GM12878 (cell line): ENCODE measurements at regions of chr15 and their contacts with region 1.

Region 1: GRCh38 chr15:44663409-44664308 is at the start of gene SPG11:
- DNase-seq: peak; percentile 99
- ATAC-seq: peak; percentile 84
- H3K4me3 ChIP-seq: peak within 1 kb of the TSS; percentile 89
- H3K27ac ChIP-seq: peak within 1 kb of the TSS; percentile 98
- H3K4me1 ChIP-seq: peaks cover 32% of the 10 kb centered on the region
- H3K27me3 ChIP-seq: no peaks in the 10 kb centered on the region
- CTCF ChIP-seq: peak; percentile 89 to 99 (median 97); a peak in 5 of 6 replicates
- EP300 ChIP-seq: no peak
- POLR2A ChIP-seq: peak; percentile 96
- RAD21 ChIP-seq: peak; percentile 81
- polyA plus RNA-seq, gene SPG11: 22.1 to 23.6 TPM

Region 2: GRCh38 chr15:44381236-44381635 is 282.4 kb before region 1 on chr15:
- CTCF ChIA-PET with region 1: no interaction called
- POLR2A ChIA-PET with region 1: no interaction called
- RAD21 ChIA-PET with region 1: no interaction called
- SMC1A ChIA-PET with region 1: no interaction called
- in situ Hi-C with region 1: no loop called
- intact Hi-C with region 1: no loop called
- DNase-seq: no peak
- ATAC-seq: no peak
- H3K4me3 ChIP-seq: no peak overlapping the region
- H3K27ac ChIP-seq: no peak overlapping the region
- H3K4me1 ChIP-seq: peaks cover 7% of the 10 kb centered on the region; the same call in 1 of the 2 replicates
- H3K27me3 ChIP-seq: no peaks in the 10 kb centered on the region
- CTCF ChIP-seq: no peak
- EP300 ChIP-seq: no peak
- POLR2A ChIP-seq: no peak
- RAD21 ChIP-seq: no peak

Region 3: GRCh38 chr15:44584162-44584749 is 79.4 kb before region 1 on chr15:
- CTCF ChIA-PET with region 1: interaction called, 20 read pairs
- POLR2A ChIA-PET with region 1: no interaction called
- RAD21 ChIA-PET with region 1: interaction called, 8 read pairs
- SMC1A ChIA-PET with region 1: interaction called, 21 read pairs
- in situ Hi-C with region 1: no loop called
- intact Hi-C with region 1: no loop called
- DNase-seq: no peak
- ATAC-seq: peak; percentile 99; the same call in 2 of the 3 replicates
- H3K4me3 ChIP-seq: no peak overlapping the region
- H3K27ac ChIP-seq: no peak overlapping the region
- H3K4me1 ChIP-seq: no peaks in the 10 kb centered on the region
- H3K27me3 ChIP-seq: no peaks in the 10 kb centered on the region
- CTCF ChIP-seq: peak; percentile 63 to 77 (median 75)
- EP300 ChIP-seq: no peak
- POLR2A ChIP-seq: no peak
- RAD21 ChIP-seq: peak; percentile 49

Region 4: GRCh38 chr15:44647036-44647435 is 16.6 kb before region 1 on chr15:
- CTCF ChIA-PET with region 1: interaction called, 3 read pairs
- POLR2A ChIA-PET with region 1: interaction called, 4 read pairs
- RAD21 ChIA-PET with region 1: no interaction called
- SMC1A ChIA-PET with region 1: interaction called, 10 read pairs
- in situ Hi-C with region 1: no loop called
- intact Hi-C with region 1: no loop called
- DNase-seq: no peak
- ATAC-seq: no peak
- H3K4me3 ChIP-seq: no peak overlapping the region
- H3K27ac ChIP-seq: no peak overlapping the region
- H3K4me1 ChIP-seq: no peaks in the 10 kb centered on the region
- H3K27me3 ChIP-seq: no peaks in the 10 kb centered on the region; a peak in 1 of 4 replicates
- CTCF ChIP-seq: no peak
- EP300 ChIP-seq: no peak
- POLR2A ChIP-seq: no peak
- RAD21 ChIP-seq: no peak

Region 5: GRCh38 chr15:44682211-44682610 is 18.6 kb after region 1 on chr15:
- CTCF ChIA-PET with region 1: interaction called, 60 read pairs
- POLR2A ChIA-PET with region 1: interaction called, 60 read pairs
- RAD21 ChIA-PET with region 1: interaction called, 69 read pairs
- SMC1A ChIA-PET with region 1: interaction called, 73 read pairs
- in situ Hi-C with region 1: no loop called
- intact Hi-C with region 1: loop called (anchors 2 kb)
- DNase-seq: no peak
- ATAC-seq: peak; percentile 71
- H3K4me3 ChIP-seq: no peak overlapping the region
- H3K27ac ChIP-seq: no peak overlapping the region
- H3K4me1 ChIP-seq: peaks cover 28% of the 10 kb centered on the region
- H3K27me3 ChIP-seq: no peaks in the 10 kb centered on the region
- CTCF ChIP-seq: no peak
- EP300 ChIP-seq: no peak
- POLR2A ChIP-seq: no peak
- RAD21 ChIP-seq: no peak

Region 6: DNA sequence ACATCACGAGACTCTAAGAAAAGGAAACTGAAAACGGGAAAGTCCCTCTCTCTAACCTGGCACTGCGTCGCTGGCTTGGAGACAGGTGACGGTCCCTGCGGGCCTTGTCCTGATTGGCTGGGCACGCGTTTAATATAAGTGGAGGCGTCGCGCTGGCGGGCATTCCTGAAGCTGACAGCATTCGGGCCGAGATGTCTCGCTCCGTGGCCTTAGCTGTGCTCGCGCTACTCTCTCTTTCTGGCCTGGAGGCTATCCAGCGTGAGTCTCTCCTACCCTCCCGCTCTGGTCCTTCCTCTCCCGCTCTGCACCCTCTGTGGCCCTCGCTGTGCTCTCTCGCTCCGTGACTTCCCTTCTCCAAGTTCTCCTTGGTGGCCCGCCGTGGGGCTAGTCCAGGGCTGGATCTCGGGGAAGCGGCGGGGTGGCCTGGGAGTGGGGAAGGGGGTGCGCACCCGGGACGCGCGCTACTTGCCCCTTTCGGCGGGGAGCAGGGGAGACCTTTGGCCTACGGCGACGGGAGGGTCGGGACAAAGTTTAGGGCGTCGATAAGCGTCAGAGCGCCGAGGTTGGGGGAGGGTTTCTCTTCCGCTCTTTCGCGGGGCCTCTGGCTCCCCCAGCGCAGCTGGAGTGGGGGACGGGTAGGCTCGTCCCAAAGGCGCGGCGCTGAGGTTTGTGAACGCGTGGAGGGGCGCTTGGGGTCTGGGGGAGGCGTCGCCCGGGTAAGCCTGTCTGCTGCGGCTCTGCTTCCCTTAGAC is 47.9 kb after region 1 on chr15 and contains the start of gene B2M:
- CTCF ChIA-PET with region 1: interaction called, 203 read pairs
- POLR2A ChIA-PET with region 1: interaction called, 255 read pairs
- RAD21 ChIA-PET with region 1: interaction called, 231 read pairs
- SMC1A ChIA-PET with region 1: interaction called, 119 read pairs
- in situ Hi-C with region 1: loop called (anchors 5 kb)
- intact Hi-C with region 1: loop called (anchors 1 kb)
- DNase-seq: peak; percentile 94
- ATAC-seq: peak; percentile 74
- H3K4me3 ChIP-seq: peak within 1 kb of the TSS; percentile 99
- H3K27ac ChIP-seq: peak within 1 kb of the TSS; percentile 99
- H3K4me1 ChIP-seq: peaks cover 16% of the 10 kb centered on the region
- H3K27me3 ChIP-seq: no peaks in the 10 kb centered on the region
- CTCF ChIP-seq: no peak
- EP300 ChIP-seq: no peak; a peak in 1 of 4 replicates
- POLR2A ChIP-seq: peak; percentile 98
- RAD21 ChIP-seq: no peak
- polyA plus RNA-seq, gene B2M: 16,306 to 22,794 TPM

Region 7: DNA sequence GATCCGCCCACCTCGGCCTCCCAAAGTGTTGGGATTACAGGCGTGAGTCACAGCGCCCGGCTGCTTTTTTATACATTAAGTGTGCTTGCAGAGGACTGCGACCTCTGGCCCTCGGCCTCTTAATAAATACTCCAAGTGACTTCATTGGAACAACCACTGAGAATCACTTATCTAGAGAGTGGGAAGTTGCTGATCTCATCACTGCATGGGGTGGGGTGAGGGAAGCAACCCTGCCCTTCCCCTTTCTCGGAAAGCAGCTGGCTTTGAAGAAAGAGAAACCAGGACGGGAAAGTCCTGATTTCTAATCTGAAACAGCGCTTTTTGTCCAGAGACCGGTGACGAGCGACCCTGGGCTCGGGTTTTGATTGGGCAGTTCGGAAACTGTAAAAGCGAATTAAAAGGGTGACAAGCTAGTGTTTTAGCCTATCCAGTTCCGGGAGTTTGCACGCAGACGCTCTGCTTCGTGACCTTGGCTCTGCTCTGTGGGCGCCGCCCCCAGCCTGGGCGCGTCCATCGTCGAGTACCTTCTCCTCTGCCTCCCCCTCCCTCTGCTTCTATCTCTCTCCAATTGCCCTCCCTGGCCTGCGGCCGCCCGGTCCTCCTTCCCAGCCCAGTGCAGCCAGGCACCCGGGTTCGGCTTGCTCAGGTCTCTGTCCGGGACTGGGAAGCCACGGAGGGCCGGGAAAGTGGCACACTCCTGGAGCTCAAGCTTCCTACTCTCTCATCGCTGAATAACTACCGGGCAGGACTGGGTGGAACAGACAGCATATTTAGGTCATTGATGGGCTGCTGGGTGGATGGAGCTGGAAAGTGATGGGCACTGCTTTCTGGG is 65.1 kb after region 1 on chr15:
- CTCF ChIA-PET with region 1: interaction called, 454 read pairs
- POLR2A ChIA-PET with region 1: interaction called, 194 read pairs
- RAD21 ChIA-PET with region 1: interaction called, 680 read pairs
- SMC1A ChIA-PET with region 1: interaction called, 383 read pairs
- in situ Hi-C with region 1: no loop called
- intact Hi-C with region 1: loop called (anchors 1 kb)
- DNase-seq: peak; percentile 100
- ATAC-seq: peak; percentile 78
- H3K4me3 ChIP-seq: peak overlapping the region; percentile 96
- H3K27ac ChIP-seq: peak overlapping the region; percentile 99
- H3K4me1 ChIP-seq: peaks cover 32% of the 10 kb centered on the region
- H3K27me3 ChIP-seq: no peaks in the 10 kb centered on the region
- CTCF ChIP-seq: no peak
- EP300 ChIP-seq: peak; percentile 35 to 82; a peak in 3 of 4 replicates
- POLR2A ChIP-seq: peak; percentile 92
- RAD21 ChIP-seq: peak; percentile 26; the same call in 1 of the 2 replicates